Dendritic cell treated with granulocyte-macrophage colony-stimulating factor and Interleukin-4, amounts not matched to agents 40 ng/mL and 50 ng/mL, for 4 days (primary cell): ENCODE measurements at regions of chr11 and their contacts with region 1.

Region 1: DNA sequence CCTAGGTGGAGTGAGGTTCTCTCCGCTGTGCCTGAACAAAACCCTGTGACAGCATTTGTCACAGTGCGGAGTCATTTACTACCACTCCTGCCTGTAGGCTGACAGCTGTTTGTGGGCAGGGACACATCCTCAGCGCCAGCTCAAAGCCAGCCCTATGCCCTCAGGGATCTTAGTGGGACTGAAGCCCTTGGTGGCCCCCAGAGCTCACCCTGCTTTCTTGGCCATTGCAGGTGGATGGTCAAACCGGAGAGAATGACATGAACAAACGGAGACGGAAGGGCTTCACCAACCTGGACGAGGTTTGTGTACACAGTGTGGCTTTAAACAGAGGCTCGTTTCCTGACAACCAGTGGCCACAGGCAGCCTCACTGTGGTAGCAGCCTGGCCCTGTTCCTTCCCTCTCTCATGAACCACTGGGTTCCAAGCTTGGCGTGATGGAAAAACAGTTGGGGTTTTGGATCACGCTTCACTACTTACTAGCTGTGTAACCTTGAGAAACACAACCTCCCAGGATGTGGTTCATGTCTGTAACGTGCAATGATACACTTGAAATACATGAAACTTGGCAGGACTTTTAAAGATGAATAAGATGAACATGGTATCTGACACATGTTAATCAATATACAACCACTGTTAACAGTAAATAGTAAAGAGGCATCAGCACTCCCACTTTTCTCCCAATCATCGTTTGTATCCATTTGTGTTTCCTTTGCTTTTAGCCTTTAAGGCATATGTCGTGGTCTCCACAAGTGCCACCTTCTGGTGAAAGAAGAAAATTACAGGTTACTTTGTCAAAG is 125.8 kb downstream of the MICAL2 start:
- H3K4me3 Mint-ChIP-seq: no peak overlapping the region
- H3K27ac Mint-ChIP-seq: no peak overlapping the region
- H3K4me1 Mint-ChIP-seq: peaks cover 22% of the 10 kb centered on the region
- H3K27me3 Mint-ChIP-seq: no peaks in the 10 kb centered on the region

Region 2: DNA sequence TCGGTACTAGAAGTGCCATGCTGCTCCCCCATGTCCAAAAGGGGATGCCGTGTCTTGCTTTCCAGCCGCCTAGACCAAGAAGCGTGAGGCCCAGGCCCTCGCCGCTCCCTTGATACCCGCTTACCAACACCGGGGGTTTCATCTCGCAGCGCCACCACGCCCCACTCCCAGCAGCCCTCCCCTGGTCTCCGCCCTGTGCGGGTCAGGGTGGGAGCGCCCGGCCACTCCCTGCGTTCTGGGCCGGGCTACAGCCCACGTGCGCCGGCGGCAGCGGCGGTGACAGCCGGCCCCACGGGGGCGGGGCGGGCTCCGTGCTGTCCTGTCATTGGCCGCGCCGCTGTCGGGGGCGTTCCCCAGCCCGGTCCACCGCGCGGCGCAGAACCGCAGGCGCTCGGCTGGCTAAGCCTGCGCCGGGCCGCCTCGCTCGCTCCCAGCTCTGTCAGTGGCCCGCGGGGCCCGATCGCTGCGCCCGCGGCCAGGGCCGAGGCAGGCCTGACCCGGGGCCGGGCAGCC is 125.9 kb before region 1 on chr11 and contains the start of gene MICAL2:
- intact Hi-C with region 1: loop called (anchors 10 kb)
- H3K4me3 Mint-ChIP-seq: peak within 1 kb of the TSS; percentile 89
- H3K27ac Mint-ChIP-seq: peak within 1 kb of the TSS; percentile 80
- H3K4me1 Mint-ChIP-seq: peaks cover 58% of the 10 kb centered on the region
- H3K27me3 Mint-ChIP-seq: no peaks in the 10 kb centered on the region

Region 3: DNA sequence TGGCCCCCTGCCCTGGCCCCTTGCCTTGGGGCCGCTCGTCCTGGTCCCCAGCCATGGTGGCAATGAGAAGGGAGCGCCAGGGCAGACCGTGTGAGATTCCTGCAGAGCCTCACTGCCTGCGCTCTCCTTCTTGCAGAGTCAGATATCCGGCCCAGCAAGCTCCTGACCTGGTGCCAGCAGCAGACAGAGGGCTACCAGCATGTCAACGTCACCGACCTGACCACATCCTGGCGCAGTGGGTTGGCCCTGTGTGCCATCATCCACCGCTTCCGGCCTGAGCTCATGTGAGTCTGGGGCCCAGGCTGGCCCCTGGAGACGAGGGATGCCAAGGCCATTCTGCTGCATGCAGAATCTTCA is 11.6 kb before region 1 on chr11:
- intact Hi-C with region 1: no loop called
- H3K4me3 Mint-ChIP-seq: no peak overlapping the region
- H3K27ac Mint-ChIP-seq: peak overlapping the region; percentile 8
- H3K4me1 Mint-ChIP-seq: peaks cover 45% of the 10 kb centered on the region
- H3K27me3 Mint-ChIP-seq: no peaks in the 10 kb centered on the region